ENCODE measurements at regions of chr5 and their contacts with region 1.

Region 1: DNA sequence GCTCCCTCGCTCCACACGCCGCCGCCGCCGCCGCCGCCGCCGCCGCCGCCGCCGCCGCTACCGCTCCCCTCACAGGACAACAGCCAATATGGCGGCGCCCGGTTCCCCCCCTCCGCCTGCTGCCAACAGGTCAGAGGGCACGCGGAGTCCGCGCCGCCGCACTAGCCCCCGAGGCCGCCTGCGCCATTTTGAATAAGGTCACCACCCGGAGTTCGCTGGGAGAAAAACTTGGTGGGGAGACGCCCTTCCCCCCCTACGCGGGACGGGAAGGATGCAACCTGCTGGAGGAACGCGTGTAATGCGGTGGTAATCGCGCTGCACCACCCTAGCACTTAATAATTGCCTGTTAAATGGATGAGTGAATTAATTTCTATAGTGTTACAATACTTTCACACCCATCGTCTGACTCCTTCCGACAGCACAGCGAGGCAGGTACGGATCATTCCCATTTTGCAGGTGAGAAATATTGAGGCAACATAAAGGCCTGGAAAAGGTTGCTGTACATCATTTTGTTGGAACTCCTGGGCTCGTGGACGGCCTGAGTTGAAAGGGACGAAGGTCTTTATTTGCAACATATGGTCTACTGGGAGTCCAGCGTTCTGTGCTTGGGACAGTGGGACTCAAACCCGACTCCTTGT is at the start of gene FAM193B:
- DNase-seq: peak; percentile 93
- ATAC-seq: peak; percentile 99
- H3K4me3 Mint-ChIP-seq: peak within 1 kb of the TSS; percentile 88
- H3K27ac Mint-ChIP-seq: peak within 1 kb of the TSS; percentile 77
- H3K4me1 Mint-ChIP-seq: peaks cover 29% of the 10 kb centered on the region
- H3K27me3 Mint-ChIP-seq: no peaks in the 10 kb centered on the region
- CTCF ChIP-seq: no peak
- total RNA-seq, gene FAM193B: 108 and 121 TPM in 2 replicates

Region 2: DNA sequence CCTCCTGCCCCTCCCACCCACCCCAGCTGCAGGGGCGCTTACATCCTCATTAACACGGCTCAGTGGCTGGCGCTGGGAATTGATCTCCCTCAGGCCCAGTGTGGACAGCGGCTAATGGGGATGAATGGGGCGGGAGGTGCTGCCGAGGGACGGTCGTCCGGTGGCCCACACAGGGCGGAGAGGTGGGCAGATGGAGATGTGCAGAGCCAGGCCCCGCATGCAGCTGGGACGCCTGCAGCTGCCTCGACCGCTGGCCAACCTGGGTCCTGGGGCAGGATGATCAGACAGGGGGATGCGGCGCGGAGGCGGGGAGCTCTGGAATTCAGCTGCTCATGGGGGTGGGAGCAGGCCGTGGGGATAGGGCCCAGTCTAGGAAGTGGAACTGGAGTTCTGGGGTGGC is 889.7 kb before region 1 on chr5:
- CTCF ChIA-PET with region 1: no interaction called
- POLR2A ChIA-PET with region 1: no interaction called
- intact Hi-C with region 1: no loop called
- DNase-seq: no peak
- ATAC-seq: no peak
- H3K4me3 Mint-ChIP-seq: no peak overlapping the region
- H3K27ac Mint-ChIP-seq: no peak overlapping the region
- H3K4me1 Mint-ChIP-seq: peaks cover 8% of the 10 kb centered on the region
- H3K27me3 Mint-ChIP-seq: peaks cover 29% of the 10 kb centered on the region
- CTCF ChIP-seq: no peak

Region 3: DNA sequence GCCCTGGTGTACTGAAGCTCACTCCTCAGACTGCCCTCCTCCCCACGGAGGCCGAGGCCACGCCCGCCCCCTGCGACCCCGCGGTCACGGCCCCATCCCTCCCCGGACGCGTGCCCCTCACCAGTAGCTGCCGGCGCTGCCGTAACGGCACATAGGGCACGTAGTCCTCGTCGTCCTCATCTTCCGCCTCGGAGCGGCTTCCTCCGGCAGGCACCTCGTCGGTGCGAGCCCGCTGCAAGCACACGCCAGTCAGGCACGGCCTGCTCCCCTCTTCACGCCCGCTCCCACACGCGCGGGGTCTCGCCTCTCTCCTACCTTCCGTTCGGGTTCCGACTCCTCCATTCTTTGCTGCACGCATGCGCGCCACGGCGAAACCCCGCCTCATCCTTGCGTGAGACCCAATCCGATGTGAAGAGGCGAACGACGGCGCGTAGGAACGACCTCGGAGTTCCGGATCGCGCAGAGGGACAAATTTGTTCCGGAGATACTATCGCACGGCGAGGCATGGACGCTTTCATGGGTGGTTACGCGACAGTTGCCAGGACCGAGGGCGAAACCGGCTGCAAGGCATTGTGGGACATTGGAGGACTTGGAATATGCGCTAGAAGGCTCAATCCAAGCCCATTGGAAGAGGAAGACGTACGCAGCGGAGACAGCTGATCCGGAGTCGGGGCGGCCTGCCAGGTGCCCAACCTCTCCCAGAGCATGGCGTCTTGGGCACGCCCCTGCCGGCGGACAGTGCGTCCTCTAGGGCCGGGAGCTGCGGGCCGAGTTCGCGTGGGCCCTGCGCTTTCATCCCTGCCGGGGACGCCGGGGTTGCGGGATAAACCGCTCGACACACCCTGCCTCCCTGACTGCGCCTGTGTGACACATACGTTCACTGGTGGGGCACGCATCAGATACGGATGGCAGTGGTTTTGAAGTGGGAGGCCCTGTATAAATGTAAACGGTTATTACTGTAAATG is 37.7 kb before region 1 on chr5 and contains the start of gene DDX41:
- CTCF ChIA-PET with region 1: no interaction called
- POLR2A ChIA-PET with region 1: no interaction called
- intact Hi-C with region 1: loop called (anchors 1 kb)
- DNase-seq: peak; percentile 93
- ATAC-seq: peak; percentile 92
- H3K4me3 Mint-ChIP-seq: peak within 1 kb of the TSS; percentile 98
- H3K27ac Mint-ChIP-seq: peak within 1 kb of the TSS; percentile 94
- H3K4me1 Mint-ChIP-seq: peaks cover 50% of the 10 kb centered on the region
- H3K27me3 Mint-ChIP-seq: no peaks in the 10 kb centered on the region
- CTCF ChIP-seq: no peak
- total RNA-seq, gene DDX41: 128 and 144 TPM in 2 replicates

Region 4: GRCh38 chr5:177592010-177592834 is 37.6 kb after region 1 on chr5 and contains the start of gene TMED9:
- CTCF ChIA-PET with region 1: no interaction called
- POLR2A ChIA-PET with region 1: no interaction called
- intact Hi-C with region 1: loop called (anchors 1 kb)
- DNase-seq: peak; percentile 85
- ATAC-seq: peak; percentile 98
- H3K4me3 Mint-ChIP-seq: peak within 1 kb of the TSS; percentile 100
- H3K27ac Mint-ChIP-seq: peak within 1 kb of the TSS; percentile 98
- H3K4me1 Mint-ChIP-seq: peaks cover 20% of the 10 kb centered on the region
- H3K27me3 Mint-ChIP-seq: peaks cover 7% of the 10 kb centered on the region
- CTCF ChIP-seq: no peak
- total RNA-seq, gene TMED9: 78.4 and 82.2 TPM in 2 replicates

Region 5: DNA sequence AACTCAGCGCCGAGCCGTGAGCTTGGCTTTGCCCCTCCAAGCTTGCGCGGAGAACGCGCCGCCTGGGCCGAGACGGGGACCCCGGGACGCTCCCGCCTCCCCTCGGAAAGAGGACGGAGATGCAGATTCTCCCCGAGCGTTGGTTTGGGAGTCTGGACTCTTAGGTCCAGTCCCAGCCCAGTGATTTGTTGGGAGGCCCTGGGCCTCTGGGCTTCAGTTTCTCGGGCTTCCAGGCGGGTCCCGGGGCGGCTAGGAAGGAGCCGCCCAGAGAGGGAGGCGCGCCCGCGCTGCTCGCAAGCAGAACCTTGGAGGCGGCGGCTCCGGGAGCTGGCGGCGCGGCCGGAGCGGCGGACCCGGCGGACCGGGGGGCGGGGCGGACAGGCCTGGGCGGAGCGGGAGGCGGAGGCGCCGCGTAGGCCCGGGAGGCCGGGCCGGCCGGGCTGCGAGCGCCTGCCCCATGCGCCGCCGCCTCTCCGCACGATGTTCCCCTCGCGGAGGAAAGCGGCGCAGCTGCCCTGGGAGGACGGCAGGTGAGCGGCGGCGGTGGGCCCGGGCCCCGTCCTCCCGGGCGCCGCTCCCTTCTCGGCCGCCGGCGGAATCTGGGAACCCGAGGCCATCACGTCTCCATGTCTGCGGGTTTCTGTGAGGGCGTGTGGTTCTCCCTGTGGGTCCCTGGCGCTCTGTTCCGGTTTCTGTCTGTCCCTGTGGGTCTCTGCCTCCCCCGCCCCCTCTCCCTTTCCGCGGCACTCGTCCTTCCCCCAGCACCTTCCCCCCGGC is 45.3 kb after region 1 on chr5 and contains the start of gene B4GALT7:
- CTCF ChIA-PET with region 1: no interaction called
- POLR2A ChIA-PET with region 1: interaction called, 3 read pairs
- intact Hi-C with region 1: loop called (anchors 2 kb)
- DNase-seq: peak; percentile 75
- ATAC-seq: peak; percentile 89
- H3K4me3 Mint-ChIP-seq: peak within 1 kb of the TSS; percentile 91
- H3K27ac Mint-ChIP-seq: peak within 1 kb of the TSS; percentile 93
- H3K4me1 Mint-ChIP-seq: peaks cover 28% of the 10 kb centered on the region
- H3K27me3 Mint-ChIP-seq: no peaks in the 10 kb centered on the region
- CTCF ChIP-seq: no peak
- total RNA-seq, gene B4GALT7: 36.3 and 42.3 TPM in 2 replicates